Mammary epithelial cell (primary cell): ENCODE measurements at regions of chr12 and their contacts with region 1.

Region 1: GRCh38 chr12:123365025-123365917 is 624 bp upstream of the SBNO1 start:
- DNase-seq: peak; percentile 98
- H3K4me3 ChIP-seq: peak overlapping the region; percentile 70 to 89 (median 84)
- H3K27ac ChIP-seq: peak overlapping the region; percentile 96
- H3K4me1 ChIP-seq: peaks cover 13% of the 10 kb centered on the region
- H3K27me3 ChIP-seq: no peaks in the 10 kb centered on the region
- CTCF ChIP-seq: peak; percentile 86 to 93

Region 2: GRCh38 chr12:123382684-123383083 is 17.4 kb after region 1 on chr12:
- CTCF ChIA-PET with region 1: interaction called, 6 read pairs
- dilution Hi-C with region 1: no loop called
- in situ Hi-C with region 1: no loop called
- intact Hi-C with region 1: loop called (anchors 2 kb)
- DNase-seq: no peak
- H3K4me3 ChIP-seq: no peak overlapping the region
- H3K27ac ChIP-seq: no peak overlapping the region
- H3K4me1 ChIP-seq: peaks cover 15% of the 10 kb centered on the region
- H3K27me3 ChIP-seq: no peaks in the 10 kb centered on the region
- CTCF ChIP-seq: no peak

Region 3: GRCh38 chr12:123436017-123436964 is 71.0 kb after region 1 on chr12 and contains the start of gene RILPL2:
- CTCF ChIA-PET with region 1: no interaction called
- dilution Hi-C with region 1: no loop called
- in situ Hi-C with region 1: no loop called
- intact Hi-C with region 1: loop called (anchors 2 kb)
- DNase-seq: peak; percentile 87
- H3K4me3 ChIP-seq: peak within 1 kb of the TSS; percentile 60 to 74 (median 69)
- H3K27ac ChIP-seq: peak within 1 kb of the TSS; percentile 51
- H3K4me1 ChIP-seq: peaks cover 8% of the 10 kb centered on the region
- H3K27me3 ChIP-seq: no peaks in the 10 kb centered on the region
- CTCF ChIP-seq: no peak
- total RNA-seq, gene RILPL2: 1.7 to 4.1 TPM